Right ventricle myocardium superior (tissue), 1 donor: ENCODE measurements at regions of chr18 and their contacts with region 1.

Region 1: GRCh38 chr18:9102508-9103375 is at the start of gene NDUFV2:
- DNase-seq: peak; percentile 98
- ATAC-seq: peak; percentile 98
- total RNA-seq, gene NDUFV2: 521 TPM

Region 2: GRCh38 chr18:8988261-8988871 is 114.4 kb before region 1 on chr18:
- intact Hi-C with region 1: no loop called
- DNase-seq: peak; percentile 56
- ATAC-seq: peak; percentile 80

Region 3: GRCh38 chr18:9136315-9137155 is 33.8 kb after region 1 on chr18 and contains the start of gene ANKRD12:
- intact Hi-C with region 1: loop called (anchors 5 kb)
- DNase-seq: peak; percentile 98
- ATAC-seq: peak; percentile 97
- total RNA-seq, gene ANKRD12: 39.9 TPM